RWPE1 (cell line): ENCODE measurements at regions of chr20 and their contacts with region 1.

Region 1: DNA sequence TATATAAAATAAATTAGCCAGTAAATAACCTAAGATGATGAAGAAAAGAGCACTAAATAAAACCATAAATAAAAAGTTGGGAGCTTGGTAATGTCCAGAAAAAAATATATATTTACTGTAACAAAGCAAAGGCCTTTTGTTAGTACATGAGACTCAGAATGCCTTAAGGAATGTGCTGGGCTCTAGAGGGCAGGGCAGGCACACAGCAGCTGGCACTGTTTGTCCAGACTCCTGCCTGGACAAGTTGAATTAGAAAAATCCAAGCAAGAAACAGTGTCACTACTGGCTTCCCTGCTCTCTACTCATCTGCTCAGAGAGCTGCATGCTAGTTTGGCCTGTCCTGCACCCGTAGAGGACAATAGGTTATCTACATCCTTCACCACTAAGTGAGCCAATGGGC is 8.8 kb downstream of the DEFB129 start:
- DNase-seq: peak; percentile 66
- H3K27ac ChIP-seq: no peak overlapping the region
- CTCF ChIP-seq: peak; percentile 77

Region 2: GRCh38 chr20:79565-79964 is 156.3 kb before region 1 on chr20:
- CTCF ChIA-PET with region 1: no interaction called
- POLR2A ChIA-PET with region 1: no interaction called
- DNase-seq: no peak
- H3K27ac ChIP-seq: no peak overlapping the region
- CTCF ChIP-seq: no peak

Region 3: GRCh38 chr20:112396-112795 is 123.5 kb before region 1 on chr20:
- CTCF ChIA-PET with region 1: no interaction called
- POLR2A ChIA-PET with region 1: no interaction called
- DNase-seq: no peak
- H3K27ac ChIP-seq: no peak overlapping the region
- CTCF ChIP-seq: no peak

Region 4: DNA sequence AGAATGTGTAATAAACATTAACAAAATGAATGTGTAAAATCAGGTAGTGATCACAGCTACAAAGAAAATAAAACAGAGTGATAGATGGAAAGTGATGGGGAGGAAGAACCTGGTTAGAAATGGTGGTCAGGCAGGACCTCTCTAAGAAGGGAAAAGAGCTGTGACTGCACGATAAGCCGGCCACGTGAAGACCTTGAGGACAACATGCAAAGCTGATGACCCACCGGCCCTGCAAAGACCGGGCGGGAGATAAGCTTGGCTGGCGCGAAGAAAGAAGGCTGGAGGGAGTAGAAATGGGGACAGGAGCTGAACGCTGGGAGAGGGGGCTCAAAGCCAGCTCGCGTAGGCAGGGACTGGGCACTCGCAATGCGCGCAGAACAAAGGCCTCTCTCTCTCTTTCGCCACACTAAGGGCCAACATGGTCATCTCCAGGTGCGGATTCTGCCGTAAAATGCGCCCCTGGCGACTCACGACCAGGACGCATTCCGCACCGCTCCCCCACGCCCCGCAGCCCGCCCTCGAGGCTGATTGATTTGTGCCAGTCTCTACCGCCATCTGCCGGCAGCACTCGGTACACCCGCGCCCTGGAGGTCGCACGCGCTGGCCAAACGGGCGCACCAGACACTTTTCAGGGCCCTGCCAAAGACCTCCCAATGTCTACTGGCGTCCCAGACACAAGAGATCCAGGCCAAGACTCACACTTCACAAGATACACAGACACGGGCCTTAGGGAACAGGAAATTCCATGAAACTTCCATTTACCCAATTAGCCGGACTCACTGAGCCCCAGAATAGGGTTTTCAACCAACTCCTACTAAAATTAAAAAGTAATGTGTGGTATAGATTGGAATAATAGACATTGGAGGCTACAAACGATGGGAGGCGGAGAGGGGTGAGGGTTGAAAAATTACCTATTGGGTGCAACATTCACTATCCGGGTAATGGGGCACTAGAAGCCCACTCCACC is 31.0 kb after region 1 on chr20:
- CTCF ChIA-PET with region 1: interaction called, 11 read pairs
- POLR2A ChIA-PET with region 1: no interaction called
- DNase-seq: peak; percentile 82
- H3K27ac ChIP-seq: no peak overlapping the region
- CTCF ChIP-seq: peak; percentile 98